CD8-positive, alpha-beta T cell (primary cell): ENCODE measurements at regions of chr7 and their contacts with region 1.

Region 1: GRCh38 chr7:64665980-64666662 is at the start of gene ZNF107:
- DNase-seq: peak; percentile 73 to 94 (median 86)
- ATAC-seq: peak; percentile 95
- H3K4me3 ChIP-seq: peak within 1 kb of the TSS; percentile 93 to 95
- H3K4me3 Mint-ChIP-seq: peak within 1 kb of the TSS; percentile 96
- H3K27ac ChIP-seq: peak within 1 kb of the TSS; percentile 92 to 93
- H3K27ac Mint-ChIP-seq: peak within 1 kb of the TSS; percentile 96
- H3K4me1 ChIP-seq: peaks cover 14% of the 10 kb centered on the region
- H3K4me1 Mint-ChIP-seq: peaks cover 64% of the 10 kb centered on the region
- H3K27me3 ChIP-seq: no peaks in the 10 kb centered on the region
- H3K27me3 Mint-ChIP-seq: no peaks in the 10 kb centered on the region
- CTCF ChIP-seq: no peak
- total RNA-seq, gene ZNF107: 14.0 to 14.7 TPM

Region 2: DNA sequence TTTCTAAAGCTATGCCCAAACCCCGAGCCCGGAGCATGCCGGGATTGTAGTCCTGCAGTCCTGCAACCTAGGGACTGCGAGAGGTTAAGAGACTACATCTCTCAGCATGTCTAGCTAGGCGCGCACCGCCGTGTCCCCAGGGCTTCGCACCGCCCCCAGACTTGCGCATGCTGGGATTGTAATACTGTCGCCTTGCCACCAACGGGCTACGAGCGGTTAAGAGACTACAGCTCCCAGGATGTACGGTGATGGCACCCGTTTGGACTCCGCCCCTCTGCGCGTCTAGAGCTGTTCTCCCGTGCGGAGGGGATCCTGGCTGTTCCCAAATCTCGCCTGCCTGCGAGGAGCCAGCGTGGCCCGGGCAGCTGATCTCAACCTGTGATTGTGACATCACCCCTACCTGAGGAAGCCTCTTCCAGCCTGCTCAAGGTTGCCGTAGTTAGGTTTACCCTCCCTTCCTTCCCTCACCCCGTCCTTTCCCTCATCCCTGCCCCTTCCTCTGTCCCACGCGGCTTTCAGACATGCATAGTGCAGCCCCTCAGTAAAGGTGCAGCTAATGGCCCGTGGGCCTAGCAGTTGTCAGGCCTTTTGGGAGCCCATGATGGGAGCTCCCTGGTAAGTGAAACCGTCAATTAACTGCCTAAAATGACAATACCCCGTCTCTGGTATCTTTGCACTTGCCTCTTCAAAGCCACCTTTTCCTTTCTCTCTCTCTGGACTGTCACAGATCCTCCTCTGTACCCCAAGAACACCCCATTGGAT is 358.7 kb before region 1 on chr7:
- CTCF ChIA-PET with region 1: no interaction called
- POLR2A ChIA-PET with region 1: interaction called, 6 read pairs
- intact Hi-C with region 1: loop called (anchors 1 to 5 kb)
- DNase-seq: peak; percentile 88 to 97 (median 94)
- ATAC-seq: peak; percentile 98
- H3K4me3 ChIP-seq: peak overlapping the region; percentile 71 to 80
- H3K4me3 Mint-ChIP-seq: peak overlapping the region; percentile 95
- H3K27ac ChIP-seq: peak overlapping the region; percentile 77 to 91
- H3K27ac Mint-ChIP-seq: peak overlapping the region; percentile 99
- H3K4me1 ChIP-seq: peaks cover 14% of the 10 kb centered on the region
- H3K4me1 Mint-ChIP-seq: peaks cover 14% of the 10 kb centered on the region
- H3K27me3 ChIP-seq: no peaks in the 10 kb centered on the region
- H3K27me3 Mint-ChIP-seq: no peaks in the 10 kb centered on the region
- CTCF ChIP-seq: no peak

Region 3: DNA sequence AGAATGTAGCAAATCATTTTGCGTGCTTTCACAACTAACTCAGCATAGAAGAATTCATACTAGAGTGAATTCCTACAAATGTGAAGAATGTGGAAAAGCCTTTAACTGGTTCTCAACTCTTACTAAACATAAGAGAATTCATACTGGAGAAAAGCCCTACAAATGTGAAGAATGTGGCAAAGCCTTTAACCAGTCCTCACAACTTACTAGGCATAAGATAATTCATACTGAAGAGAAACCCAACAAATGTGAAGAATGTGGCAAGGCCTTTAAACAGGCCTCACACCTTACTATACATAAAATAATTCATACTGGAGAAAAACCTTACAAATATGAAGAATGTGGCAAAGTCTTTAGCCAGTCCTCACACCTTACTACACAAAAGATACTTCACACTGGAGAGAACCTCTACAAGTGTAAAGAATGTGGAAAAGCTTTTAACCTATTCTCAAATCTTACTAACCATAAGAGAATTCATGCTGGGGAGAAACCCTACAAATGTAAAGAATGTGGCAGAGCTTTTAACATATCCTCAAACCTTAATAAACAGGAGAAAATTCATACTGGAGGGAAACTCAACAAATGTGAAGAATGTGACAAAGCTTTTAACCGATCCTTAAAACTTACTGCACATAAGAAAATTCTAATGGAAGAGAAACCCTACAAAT is 40.6 kb after region 1 on chr7:
- CTCF ChIA-PET with region 1: no interaction called
- POLR2A ChIA-PET with region 1: no interaction called
- intact Hi-C with region 1: loop called in 1 of 2 experiments (anchors 5 kb)
- DNase-seq: no peak
- ATAC-seq: no peak
- H3K4me3 ChIP-seq: peak overlapping the region in 1 of 2 experiments; percentile 22
- H3K4me3 Mint-ChIP-seq: no peak overlapping the region
- H3K27ac ChIP-seq: no peak overlapping the region
- H3K27ac Mint-ChIP-seq: no peak overlapping the region
- H3K4me1 ChIP-seq: no peaks in the 10 kb centered on the region
- H3K4me1 Mint-ChIP-seq: no peaks in the 10 kb centered on the region
- H3K27me3 ChIP-seq: no peaks in the 10 kb centered on the region
- H3K27me3 Mint-ChIP-seq: no peaks in the 10 kb centered on the region
- CTCF ChIP-seq: no peak